Lower leg skin (tissue), 4 donors: ENCODE measurements at regions of chr6 and their contacts with region 1.

Region 1: GRCh38 chr6:44074439-44075136 is 52.7 kb downstream of the MRPL14 start:
- DNase-seq: peak; percentile 65 to 93
- H3K4me3 ChIP-seq: no peak overlapping the region
- CTCF ChIP-seq: peak in 1 of 3 donors; percentile 84
- POLR2A ChIP-seq: no peak

Region 2: GRCh38 chr6:43667245-43668150 is 407.1 kb before region 1 on chr6:
- intact Hi-C with region 1: loop called (anchors 5 kb)
- DNase-seq: peak; percentile 65 to 97
- H3K4me3 ChIP-seq: no peak overlapping the region
- CTCF ChIP-seq: peak in 1 of 3 donors; percentile 91
- POLR2A ChIP-seq: no peak

Region 3: GRCh38 chr6:43723737-43724295 is 350.8 kb before region 1 on chr6:
- intact Hi-C with region 1: loop called (anchors 5 kb)
- DNase-seq: peak; percentile 56 to 92
- H3K4me3 ChIP-seq: no peak overlapping the region
- CTCF ChIP-seq: no peak
- POLR2A ChIP-seq: no peak

Region 4: GRCh38 chr6:43769526-43770416 is 304.8 kb before region 1 on chr6 and contains the start of gene VEGFA:
- intact Hi-C with region 1: loop called (anchors 2 kb)
- DNase-seq: peak; percentile 89 to 98
- H3K4me3 ChIP-seq: peak within 1 kb of the TSS; percentile 85
- CTCF ChIP-seq: peak in 1 of 3 donors; percentile 94
- POLR2A ChIP-seq: no peak
- total RNA-seq, gene VEGFA: 36.2 to 91.3 (median 70.4) TPM